Ascending aorta (tissue), 2 donors: ENCODE measurements at regions of chr12 and their contacts with region 1.

Region 1: GRCh38 chr12:76559400-76560085 is at the start of gene OSBPL8:
- DNase-seq: peak; percentile 93 to 99
- H3K4me3 ChIP-seq: peak within 1 kb of the TSS; percentile 71 to 89
- H3K27ac ChIP-seq: peak within 1 kb of the TSS; percentile 91 to 95
- H3K4me1 ChIP-seq: peaks cover 4 to 9% of the 10 kb centered on the region in 2 donors
- H3K27me3 ChIP-seq: no peaks in the 10 kb centered on the region
- CTCF ChIP-seq: peak; percentile 9 to 44 (median 16)
- total RNA-seq, gene OSBPL8: 18.6 TPM

Region 2: GRCh38 chr12:75480469-75480949 is 1079.0 kb before region 1 on chr12 and contains the start of gene GLIPR1:
- intact Hi-C with region 1: loop called (anchors 2 kb)
- DNase-seq: peak; percentile 52 to 94
- H3K4me3 ChIP-seq: peak within 1 kb of the TSS; percentile 66 to 75
- H3K27ac ChIP-seq: peak within 1 kb of the TSS; percentile 88 to 90
- H3K4me1 ChIP-seq: peaks cover 5 to 14% of the 10 kb centered on the region in 2 donors
- H3K27me3 ChIP-seq: no peaks in the 10 kb centered on the region
- CTCF ChIP-seq: no peak
- total RNA-seq, gene GLIPR1: 43.9 TPM

Region 3: DNA sequence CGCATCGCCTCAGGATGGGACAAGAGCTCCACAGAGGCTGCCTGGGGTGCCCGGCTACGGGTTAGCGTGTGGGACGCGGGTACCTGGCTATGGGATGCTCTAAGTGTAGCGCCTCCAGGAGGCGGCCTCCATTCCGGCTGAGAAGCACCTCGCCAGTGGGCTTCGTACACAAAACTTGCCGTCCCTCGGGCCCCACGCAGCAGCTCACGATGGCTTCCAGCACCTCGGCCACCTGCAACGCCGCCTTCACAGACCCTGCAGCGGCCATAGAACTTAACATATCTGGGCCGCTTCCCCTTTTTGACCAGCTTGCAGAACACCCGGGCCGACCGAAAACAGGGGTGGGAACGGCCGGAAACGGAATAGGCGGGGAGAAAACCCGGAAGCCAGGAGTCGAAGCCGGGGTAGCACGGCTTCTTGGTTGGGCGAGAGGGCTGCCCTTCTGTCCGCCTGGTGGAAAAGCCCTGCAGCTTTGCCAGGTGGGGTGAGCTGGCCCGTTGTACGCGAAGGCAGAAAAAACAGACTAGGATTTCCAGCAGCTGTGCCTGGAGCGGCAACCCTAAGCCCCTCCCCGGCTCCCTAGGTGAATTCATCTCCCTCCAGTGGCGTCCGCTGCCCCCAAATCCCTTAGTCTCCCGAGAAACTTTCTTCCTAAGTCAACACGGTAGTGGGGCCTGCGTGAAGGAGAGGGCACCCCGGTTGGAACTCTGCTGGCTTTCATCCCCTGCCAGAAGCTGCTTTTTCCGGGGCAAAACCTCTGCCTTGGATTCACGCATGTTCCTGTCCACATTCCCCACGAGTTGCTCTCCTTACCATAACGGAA is 211.3 kb before region 1 on chr12 and contains the start of gene BBS10:
- intact Hi-C with region 1: loop called (anchors 5 kb)
- DNase-seq: peak; percentile 65 to 94
- H3K4me3 ChIP-seq: peak within 1 kb of the TSS; percentile 70 to 85
- H3K27ac ChIP-seq: peak within 1 kb of the TSS; percentile 84 to 86
- H3K4me1 ChIP-seq: peaks cover 6 to 22% of the 10 kb centered on the region in 2 donors
- H3K27me3 ChIP-seq: no peaks in the 10 kb centered on the region
- CTCF ChIP-seq: peak; percentile 12 to 48 (median 17)
- total RNA-seq, gene BBS10: 3.8 TPM

Region 4: DNA sequence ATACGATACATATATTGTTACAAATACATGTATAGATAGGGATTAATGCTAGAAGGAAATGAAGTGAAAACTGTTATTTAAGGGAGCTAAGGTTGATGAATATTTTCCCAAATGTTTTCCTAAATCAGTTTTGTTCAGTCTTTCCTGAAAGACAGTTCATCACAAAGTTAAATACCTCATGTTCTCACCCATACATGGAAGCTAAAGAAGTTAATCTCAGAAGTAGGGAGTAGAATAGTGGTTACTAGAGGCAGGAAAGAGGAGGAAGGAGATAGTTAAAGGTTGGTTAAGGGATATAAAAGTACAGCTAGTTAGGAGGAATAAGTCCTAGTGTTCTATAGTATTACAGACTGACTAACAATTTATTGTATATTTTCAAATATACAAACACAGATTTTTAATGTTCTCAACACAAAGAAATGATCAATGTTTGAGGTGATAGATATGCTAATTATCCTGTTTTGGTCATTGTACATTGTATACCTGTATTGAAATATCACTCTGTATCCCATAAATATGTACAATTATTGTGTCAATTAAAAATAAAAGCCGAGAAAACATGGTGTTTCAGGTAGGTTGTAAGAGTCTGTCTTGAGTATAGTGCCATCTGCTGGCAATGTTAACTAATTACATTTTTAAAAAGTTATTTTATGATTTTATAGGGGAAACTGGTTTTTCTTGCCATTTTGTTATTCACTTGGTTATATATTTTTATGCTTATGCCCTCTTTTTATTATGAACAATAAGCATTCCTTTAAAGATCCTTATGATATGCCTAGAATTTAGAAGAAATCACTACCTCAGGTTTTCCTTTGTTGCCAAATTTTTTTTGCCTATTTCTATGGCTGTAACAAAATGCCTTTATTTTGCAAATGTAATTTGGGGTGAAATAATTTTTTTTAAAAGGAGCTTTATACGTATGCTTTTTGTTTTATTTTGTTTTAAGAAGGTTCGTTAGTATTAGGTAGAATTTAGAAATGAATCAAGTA is 231.3 kb after region 1 on chr12:
- intact Hi-C with region 1: loop called (anchors 10 kb)
- DNase-seq: no peak
- H3K4me3 ChIP-seq: no peak overlapping the region
- H3K27ac ChIP-seq: no peak overlapping the region
- H3K4me1 ChIP-seq: peaks cover 0 to 3% of the 10 kb centered on the region in 2 donors
- H3K27me3 ChIP-seq: no peaks in the 10 kb centered on the region
- CTCF ChIP-seq: peak; percentile 36 to 71 (median 54)

Region 5: GRCh38 chr12:76878899-76879709 is 319.6 kb after region 1 on chr12 and contains the start of gene CSRP2:
- intact Hi-C with region 1: loop called (anchors 1 kb)
- DNase-seq: peak; percentile 83 to 96
- H3K4me3 ChIP-seq: peak within 1 kb of the TSS; percentile 70 to 76
- H3K27ac ChIP-seq: peak within 1 kb of the TSS; percentile 94 to 98
- H3K4me1 ChIP-seq: peaks cover 0 to 33% of the 10 kb centered on the region in 2 donors
- H3K27me3 ChIP-seq: no peaks in the 10 kb centered on the region
- CTCF ChIP-seq: peak; percentile 18 to 36 (median 30)
- total RNA-seq, gene CSRP2: 59.7 TPM